Activated CD4-positive, alpha-beta T cell treated with anti-CD3 and anti-CD28 coated beads for 36 hours (primary cell): ENCODE measurements at regions of chr16 and their contacts with region 1.

Region 1: GRCh38 chr16:89791278-89791995 is 25.0 kb downstream of the FANCA start:
- DNase-seq: no peak
- ATAC-seq: no peak
- H3K4me3 Mint-ChIP-seq: no peak overlapping the region
- H3K27ac Mint-ChIP-seq: no peak overlapping the region
- H3K4me1 Mint-ChIP-seq: peaks cover 6% of the 10 kb centered on the region
- H3K27me3 Mint-ChIP-seq: no peaks in the 10 kb centered on the region

Region 2: DNA sequence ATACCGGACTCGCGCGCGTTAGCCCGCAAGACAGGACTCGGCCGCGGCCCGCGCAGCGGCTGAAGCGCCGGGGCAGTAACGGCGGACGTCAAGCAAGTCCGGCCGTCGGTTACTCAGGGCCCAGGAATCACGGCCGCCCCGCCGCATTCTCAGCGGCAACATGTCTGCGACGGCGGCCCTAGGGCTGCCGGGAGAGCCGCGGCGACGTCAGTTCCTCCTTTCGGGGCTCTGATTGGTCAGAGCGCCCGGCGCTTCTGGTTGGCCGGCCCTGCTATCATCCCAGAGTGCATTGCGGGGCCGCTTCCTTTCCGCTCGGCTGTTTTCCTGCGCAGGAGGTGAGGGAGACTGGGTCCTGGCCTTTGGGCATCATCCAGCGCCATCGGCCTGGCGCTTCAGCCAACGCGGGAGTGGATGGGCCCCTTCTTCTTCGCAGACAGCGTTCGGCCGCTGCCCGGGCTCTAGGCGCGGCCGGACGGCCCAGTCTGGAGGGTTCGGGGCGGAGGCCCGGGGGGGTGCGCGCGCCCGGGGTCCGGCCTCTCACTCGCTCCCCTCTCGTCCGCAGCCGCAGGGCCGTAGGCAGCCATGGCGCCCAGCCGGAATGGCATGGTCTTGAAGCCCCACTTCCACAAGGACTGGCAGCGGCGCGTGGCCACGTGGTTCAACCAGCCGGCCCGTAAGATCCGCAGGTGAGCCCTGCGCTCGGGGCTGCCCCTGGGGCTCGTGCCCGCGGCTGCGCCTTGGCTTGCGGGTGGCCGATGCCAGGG is 230.9 kb before region 1 on chr16 and contains the start of gene RPL13:
- CTCF ChIA-PET with region 1: no interaction called
- POLR2A ChIA-PET with region 1: no interaction called
- intact Hi-C with region 1: no loop called
- DNase-seq: peak; percentile 97
- ATAC-seq: peak; percentile 90
- H3K4me3 Mint-ChIP-seq: peak within 1 kb of the TSS; percentile 95
- H3K27ac Mint-ChIP-seq: peak within 1 kb of the TSS; percentile 99
- H3K4me1 Mint-ChIP-seq: peaks cover 46% of the 10 kb centered on the region
- H3K27me3 Mint-ChIP-seq: no peaks in the 10 kb centered on the region
- total RNA-seq, gene RPL13: 2,518 to 3,038 TPM

Region 3: DNA sequence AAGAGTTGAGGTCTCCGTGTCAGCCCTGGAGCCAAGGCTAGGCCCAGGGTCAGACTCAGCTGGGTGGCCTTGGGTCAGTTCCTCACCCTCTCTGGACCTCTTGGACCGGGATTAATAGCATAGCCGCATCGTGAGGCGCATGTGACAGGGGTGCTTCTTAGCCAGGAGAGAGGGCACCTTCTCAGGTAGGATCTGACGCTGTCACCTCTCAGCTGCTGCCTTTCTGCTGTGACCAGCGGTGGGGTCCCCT is 45.8 kb after region 1 on chr16:
- CTCF ChIA-PET with region 1: no interaction called
- POLR2A ChIA-PET with region 1: no interaction called
- intact Hi-C with region 1: no loop called
- DNase-seq: no peak
- ATAC-seq: peak; percentile 8
- H3K4me3 Mint-ChIP-seq: no peak overlapping the region
- H3K27ac Mint-ChIP-seq: peak overlapping the region; percentile 37
- H3K4me1 Mint-ChIP-seq: peaks cover 16% of the 10 kb centered on the region
- H3K27me3 Mint-ChIP-seq: no peaks in the 10 kb centered on the region

Region 4: DNA sequence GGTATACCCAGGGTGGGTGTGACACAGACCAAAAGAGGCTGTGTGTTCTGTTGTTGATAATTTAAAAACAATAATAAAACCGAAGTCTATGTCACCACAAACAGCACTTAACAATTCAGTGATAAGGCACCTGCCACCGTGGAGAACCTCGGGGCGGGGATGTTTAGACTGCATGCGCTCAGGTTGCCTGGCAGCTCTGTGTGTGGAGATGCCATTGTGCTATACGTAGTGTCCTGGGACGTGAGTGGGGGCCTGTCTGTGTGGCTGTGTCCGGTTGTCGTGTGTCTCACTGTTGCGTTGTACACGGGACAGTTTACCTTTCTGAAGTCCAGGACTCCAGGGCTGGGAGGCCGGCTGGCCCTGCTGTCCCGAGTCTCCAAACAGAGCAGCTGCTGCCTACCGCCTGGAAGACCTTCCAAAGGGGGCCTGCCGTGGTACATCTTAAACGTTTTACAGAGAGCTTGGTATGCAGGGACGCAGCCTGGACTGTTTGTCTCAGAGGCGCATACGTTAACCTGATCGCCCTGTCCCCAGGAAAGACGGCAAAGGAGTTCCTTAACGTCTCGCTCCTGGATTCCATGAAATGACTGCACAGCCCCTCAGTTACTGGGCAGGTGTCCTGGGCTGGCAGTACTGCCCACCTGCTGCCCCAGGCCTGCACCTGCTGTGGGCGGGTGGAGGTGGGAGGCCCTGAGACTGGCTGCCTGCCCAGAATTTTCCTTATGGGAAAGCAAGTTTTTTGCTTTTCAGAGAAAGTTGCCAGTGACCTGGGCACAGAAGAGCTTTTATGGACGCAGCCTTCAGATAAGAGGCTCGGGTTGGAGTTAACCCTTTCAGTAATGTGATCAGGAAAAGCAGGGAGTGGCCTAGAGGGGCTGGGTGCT is 55.9 kb after region 1 on chr16:
- CTCF ChIA-PET with region 1: no interaction called
- POLR2A ChIA-PET with region 1: no interaction called
- intact Hi-C with region 1: no loop called
- DNase-seq: no peak
- ATAC-seq: no peak
- H3K4me3 Mint-ChIP-seq: no peak overlapping the region
- H3K27ac Mint-ChIP-seq: no peak overlapping the region
- H3K4me1 Mint-ChIP-seq: peaks cover 8% of the 10 kb centered on the region
- H3K27me3 Mint-ChIP-seq: no peaks in the 10 kb centered on the region

Region 5: GRCh38 chr16:89860747-89861304 is 69.4 kb after region 1 on chr16:
- CTCF ChIA-PET with region 1: interaction called, 12 read pairs
- POLR2A ChIA-PET with region 1: no interaction called
- intact Hi-C with region 1: no loop called
- DNase-seq: peak; percentile 84
- ATAC-seq: peak; percentile 81
- H3K4me3 Mint-ChIP-seq: no peak overlapping the region
- H3K27ac Mint-ChIP-seq: no peak overlapping the region
- H3K4me1 Mint-ChIP-seq: peaks cover 28% of the 10 kb centered on the region
- H3K27me3 Mint-ChIP-seq: no peaks in the 10 kb centered on the region

Region 6: DNA sequence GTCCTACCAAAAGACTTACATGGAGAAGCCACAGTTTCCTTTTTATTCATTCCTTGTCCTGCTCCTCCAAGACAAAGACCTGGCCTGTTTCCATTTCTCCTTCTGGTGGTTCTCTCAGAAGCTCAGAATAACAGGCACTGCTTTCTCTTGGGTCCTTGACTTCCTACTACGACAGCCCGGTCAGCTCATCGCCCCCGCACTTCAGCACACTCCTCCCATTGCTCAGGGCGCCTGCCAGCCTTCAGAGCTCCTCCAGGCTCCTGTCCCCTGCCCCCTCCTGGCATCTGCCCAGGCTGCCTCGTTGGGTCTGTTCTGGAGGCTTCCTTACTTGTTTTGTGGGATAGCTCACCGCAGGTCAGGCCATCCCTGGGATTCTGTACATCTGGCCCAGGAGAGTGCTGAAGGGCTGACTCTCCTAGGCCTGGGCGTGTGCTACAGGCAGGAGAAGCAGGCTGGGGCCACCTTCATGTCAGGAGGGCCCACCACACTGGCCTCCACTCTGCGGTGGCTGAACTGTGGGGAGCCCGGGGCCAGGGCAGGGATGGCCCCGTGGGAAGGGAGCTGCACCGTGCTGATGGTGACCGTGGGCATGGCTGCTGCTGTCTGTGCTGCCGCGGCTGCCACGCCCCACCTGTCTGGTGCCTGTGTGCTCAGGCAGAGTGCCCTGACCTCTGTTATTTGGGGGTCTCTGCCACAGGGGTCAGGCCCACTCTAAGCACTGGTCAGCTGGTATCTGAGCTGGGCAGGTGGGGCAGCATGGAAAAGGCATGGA is 99.6 kb after region 1 on chr16:
- CTCF ChIA-PET with region 1: no interaction called
- POLR2A ChIA-PET with region 1: no interaction called
- intact Hi-C with region 1: no loop called
- DNase-seq: no peak
- ATAC-seq: no peak
- H3K4me3 Mint-ChIP-seq: no peak overlapping the region
- H3K27ac Mint-ChIP-seq: no peak overlapping the region
- H3K4me1 Mint-ChIP-seq: peaks cover 12% of the 10 kb centered on the region
- H3K27me3 Mint-ChIP-seq: no peaks in the 10 kb centered on the region